ENCODE measurements at regions of chr19 and their contacts with region 1.

Region 1: GRCh38 chr19:42386974-42387707 is 3.0 kb downstream of the CNFN start:
- DNase-seq: peak; percentile 25
- ATAC-seq: peak; percentile 98
- H3K4me3 ChIP-seq: peak overlapping the region; percentile 48 to 60
- H3K27ac ChIP-seq: peak overlapping the region; percentile 54
- H3K4me1 ChIP-seq: no peaks in the 10 kb centered on the region; the same call in 1 of the 2 replicates
- H3K27me3 ChIP-seq: no peaks in the 10 kb centered on the region
- CTCF ChIP-seq: no peak; the same call in 1 of the 2 replicates

Region 2: DNA sequence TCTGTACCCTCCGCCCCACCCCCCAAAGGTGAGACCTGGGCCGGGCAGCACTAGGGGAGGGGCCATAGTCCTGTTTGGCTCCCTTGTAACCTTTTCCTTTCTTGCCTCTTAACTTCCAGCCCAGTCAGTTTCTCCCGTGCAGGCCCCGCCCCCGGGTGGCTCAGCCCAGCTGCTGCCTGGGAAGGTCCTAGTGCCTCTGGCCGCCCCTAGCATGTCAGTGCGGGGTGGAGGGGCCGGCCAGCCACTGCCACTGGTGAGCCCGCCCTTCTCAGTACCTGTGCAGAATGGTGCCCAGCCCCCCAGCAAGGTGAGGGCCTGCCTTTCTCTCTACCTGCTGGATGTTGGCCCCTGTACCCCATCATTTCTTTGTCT is 95.7 kb before region 1 on chr19:
- CTCF ChIA-PET with region 1: interaction called, 11 read pairs
- POLR2A ChIA-PET with region 1: no interaction called
- in situ Hi-C with region 1: no loop called
- intact Hi-C with region 1: no loop called
- DNase-seq: no peak
- ATAC-seq: peak; percentile 26; the same call in 1 of the 2 replicates
- H3K4me3 ChIP-seq: no peak overlapping the region
- H3K27ac ChIP-seq: no peak overlapping the region
- H3K4me1 ChIP-seq: no peaks in the 10 kb centered on the region
- H3K27me3 ChIP-seq: no peaks in the 10 kb centered on the region
- CTCF ChIP-seq: no peak

Measured in Panc1 (cell line).